Posterior cingulate gyrus (tissue), 11 donors: ENCODE measurements at regions of chr12 and their contacts with region 1.

Region 1: DNA sequence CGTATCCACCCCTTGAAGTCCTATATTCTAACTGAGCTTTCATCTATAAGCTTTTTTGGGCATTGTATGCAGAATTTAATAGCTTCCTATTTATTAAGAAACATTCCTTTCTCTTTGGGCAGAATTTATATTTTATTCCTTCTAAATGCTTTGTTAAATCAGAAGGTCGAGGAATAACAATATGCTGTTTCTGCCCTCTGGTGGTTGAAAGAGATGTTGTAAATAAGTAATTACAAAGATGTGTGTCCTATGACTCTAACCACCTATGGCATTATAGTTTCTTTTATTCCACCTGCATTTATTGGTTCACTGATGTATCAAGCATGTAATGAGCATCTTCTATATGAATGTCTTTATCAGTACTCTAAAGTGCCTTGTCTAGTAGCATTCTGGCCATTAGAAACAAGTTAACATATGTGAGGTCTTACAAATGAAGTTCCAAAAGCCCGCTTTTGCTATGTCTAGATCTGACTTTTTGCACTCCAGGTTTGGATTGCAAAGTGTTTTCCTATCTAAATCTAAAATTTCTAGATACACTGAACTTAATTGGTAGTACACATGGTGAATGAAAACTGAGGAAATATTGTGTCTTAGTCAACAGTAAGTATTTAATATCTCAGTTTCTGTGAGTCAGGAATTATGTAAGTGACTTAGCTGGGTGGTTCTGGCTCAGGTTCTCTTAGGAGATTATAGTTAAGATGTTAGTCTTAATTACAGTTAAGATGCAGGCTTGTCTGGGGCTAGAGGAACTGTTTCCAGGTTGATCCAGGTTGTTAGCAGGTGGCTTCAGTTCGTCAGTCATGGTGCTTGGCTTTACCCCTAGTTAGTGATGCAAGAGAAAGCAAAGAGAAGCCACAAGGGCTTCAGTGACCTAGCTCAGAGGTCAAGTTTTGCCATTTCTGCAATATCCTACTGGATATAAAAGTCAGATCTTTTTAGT is 57.5 kb downstream of the PLEKHA5 start:
- DNase-seq: no peak

Region 2: DNA sequence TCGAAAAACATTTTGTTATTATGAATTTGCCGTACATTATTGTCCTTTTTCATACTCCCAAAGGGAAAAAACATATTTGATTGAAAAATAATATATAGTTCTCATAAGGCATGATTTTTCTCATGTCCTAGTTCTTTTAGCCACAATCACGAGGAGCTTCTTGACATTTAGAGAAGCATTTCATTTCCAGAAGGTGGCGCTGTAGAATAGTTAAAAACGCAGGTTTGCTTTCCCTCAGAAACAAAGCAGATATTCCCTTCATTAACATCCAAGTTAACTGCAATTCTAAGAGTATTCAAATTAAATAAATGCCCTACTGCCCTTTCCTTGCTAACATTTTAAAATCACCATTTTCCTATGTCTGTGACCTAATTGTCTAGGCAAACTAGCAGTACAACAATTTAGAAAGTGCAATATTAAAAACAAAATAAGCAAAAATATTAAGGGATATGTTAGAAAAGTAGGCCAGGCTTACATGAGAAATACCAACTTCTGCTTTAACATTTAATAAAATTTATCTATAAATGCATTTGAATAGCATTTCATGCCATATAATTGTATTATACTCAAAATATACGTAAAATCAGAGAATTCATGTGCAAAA is 936.6 kb before region 1 on chr12:
- intact Hi-C with region 1: loop called (anchors 5 kb)
- DNase-seq: no peak

Region 3: DNA sequence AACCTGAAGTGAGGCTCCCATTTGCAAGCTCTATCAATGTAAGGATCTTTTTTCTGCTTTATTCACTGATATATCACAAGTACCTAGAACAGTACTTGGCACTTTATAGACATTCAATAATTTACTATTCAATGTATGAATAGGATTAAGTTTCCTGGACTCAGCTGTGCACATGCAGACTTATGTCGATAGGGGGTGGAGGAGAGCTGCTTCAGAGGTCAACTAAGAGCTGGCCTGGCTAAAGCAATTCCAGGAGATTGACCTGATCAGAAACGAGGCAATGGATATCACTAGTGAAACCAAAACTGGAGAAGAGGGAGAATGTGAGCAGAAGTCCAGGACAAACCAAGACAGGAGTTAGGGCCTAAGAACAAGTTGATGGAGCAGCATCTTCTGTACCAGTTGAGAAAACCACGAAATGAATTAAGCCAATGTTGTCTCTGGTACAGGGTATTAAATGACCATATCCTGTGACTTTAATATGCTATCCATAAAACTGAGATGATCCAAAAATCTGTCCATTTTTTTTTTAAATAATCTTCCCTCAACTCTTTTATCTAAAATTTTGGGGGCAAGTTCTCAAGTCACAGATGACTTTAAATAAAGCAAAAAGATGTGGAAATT is 756.5 kb before region 1 on chr12:
- intact Hi-C with region 1: loop called (anchors 5 kb)
- DNase-seq: peak in 2 of 10 donors; percentile 15 to 17

Region 4: GRCh38 chr12:19491863-19492262 is 304.9 kb after region 1 on chr12:
- intact Hi-C with region 1: no loop called
- DNase-seq: no peak

Region 5: GRCh38 chr12:19643635-19644034 is 456.6 kb after region 1 on chr12:
- intact Hi-C with region 1: loop called (anchors 10 kb)
- DNase-seq: no peak